Activated CD4-positive, alpha-beta T cell treated with anti-CD3 and anti-CD28 coated beads, Interleukin-2, amount 10 ng/mL, durations not matched to agents 24 days and 14 days (primary cell): ENCODE measurements at regions of chr2 and their contacts with region 1.

Region 1: DNA sequence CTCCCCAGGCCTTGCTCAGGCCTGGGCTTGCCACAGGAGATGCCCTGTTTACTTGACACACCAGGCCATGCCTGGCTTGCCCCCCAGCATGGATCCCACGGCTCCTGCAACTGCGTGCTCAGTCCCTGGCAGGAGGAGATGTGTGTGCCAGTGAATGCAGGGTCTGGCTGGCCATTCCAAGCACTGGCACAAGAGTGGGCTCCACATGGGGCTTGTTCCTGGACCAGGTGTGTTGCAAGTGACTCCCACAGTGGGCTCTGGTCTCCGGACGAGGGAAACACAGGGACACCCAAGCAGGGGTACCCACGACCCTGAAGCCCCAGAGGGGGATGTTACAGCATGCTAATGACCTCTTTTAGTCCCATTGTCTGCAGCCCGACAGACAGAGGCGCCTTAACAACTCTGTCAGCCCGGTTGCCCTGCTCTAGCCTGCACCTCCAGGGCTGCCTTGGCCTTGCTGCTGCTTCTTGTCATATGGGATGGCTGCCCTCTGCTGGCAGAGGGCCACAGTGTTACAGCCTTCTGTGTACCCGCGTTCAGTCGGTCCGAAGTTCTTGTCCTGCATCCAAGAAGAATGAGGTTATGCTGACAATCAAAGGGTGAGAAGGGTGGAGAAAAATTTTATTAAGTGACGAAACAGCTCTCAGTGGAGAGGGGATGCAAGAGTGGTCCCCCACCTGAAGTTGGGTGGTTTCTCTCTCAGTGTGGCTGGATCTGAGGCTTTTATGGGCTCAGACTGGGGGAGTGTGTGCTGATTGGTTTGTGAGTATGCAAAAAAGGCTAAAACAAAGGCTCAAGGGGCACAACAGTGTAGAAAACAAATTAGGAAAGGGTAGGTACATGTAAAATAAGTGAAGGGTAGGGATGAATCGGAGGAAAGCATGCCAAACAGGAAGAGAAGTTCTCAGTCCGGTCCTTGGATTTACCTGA is 180.4 kb downstream of the MBD5 start:
- DNase-seq: peak; percentile 82
- H3K4me3 Mint-ChIP-seq: no peak overlapping the region
- H3K27ac Mint-ChIP-seq: no peak overlapping the region
- H3K4me1 Mint-ChIP-seq: no peaks in the 10 kb centered on the region
- H3K27me3 Mint-ChIP-seq: no peaks in the 10 kb centered on the region

Region 2: GRCh38 chr2:147989809-147990403 is 211.4 kb before region 1 on chr2:
- intact Hi-C with region 1: loop called (anchors 1 kb)
- DNase-seq: peak; percentile 72
- H3K4me3 Mint-ChIP-seq: no peak overlapping the region
- H3K27ac Mint-ChIP-seq: no peak overlapping the region
- H3K4me1 Mint-ChIP-seq: peaks cover 7% of the 10 kb centered on the region
- H3K27me3 Mint-ChIP-seq: no peaks in the 10 kb centered on the region